ENCODE measurements at regions of chr1 and their contacts with region 1.

Region 1: DNA sequence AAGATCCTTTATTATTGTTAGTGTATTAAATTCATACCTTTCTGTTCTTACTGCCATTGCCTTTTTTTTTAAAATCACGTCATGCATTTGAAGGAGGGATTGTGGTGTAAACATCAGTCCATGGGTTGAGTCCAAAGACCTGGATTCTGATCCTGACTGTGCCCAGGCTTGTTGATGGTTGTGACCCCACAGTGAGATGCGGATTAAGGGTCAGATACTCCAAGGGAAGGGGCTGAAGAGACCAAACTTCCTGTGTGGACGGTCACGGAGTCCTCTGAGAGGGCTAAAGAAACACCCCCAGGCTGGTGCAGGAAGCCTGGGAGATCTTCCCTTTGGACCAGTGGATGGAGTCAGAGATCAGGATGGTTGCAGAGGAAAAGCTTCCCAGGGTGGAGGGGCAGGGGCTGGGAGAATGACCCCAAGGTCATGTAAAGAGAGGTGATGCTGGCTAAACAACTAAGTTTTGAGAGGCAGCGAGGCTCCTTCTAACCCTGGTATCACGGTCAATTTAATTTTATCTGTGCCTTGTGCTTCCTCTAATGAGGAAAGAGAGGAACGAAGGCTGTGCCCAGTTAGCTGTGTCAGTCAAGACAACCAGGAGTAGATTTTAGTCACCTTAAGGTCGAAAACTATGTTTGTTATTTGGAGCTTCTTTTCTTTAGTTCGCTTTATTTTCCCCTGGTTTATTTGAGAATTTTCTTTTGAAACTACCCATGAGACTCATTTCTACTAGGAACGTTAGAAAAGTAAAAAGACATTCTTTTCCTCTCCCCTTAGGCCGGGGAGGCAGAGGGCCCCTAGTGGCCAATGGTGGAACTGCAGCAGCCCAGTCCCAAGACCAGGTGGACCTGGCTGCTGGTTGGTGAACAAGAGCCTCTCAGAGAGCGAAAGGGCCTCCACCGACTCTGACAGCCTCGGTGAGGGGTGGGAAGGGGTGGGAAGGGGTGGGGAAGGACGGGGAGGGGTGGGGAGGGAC is 8.7 kb upstream of the GPR161 start:
- DNase-seq: peak; percentile 69 to 78 (median 72)
- H3K4me3 ChIP-seq: no peak overlapping the region
- H3K4me3 Mint-ChIP-seq: peak overlapping the region in 1 of 8 donors; percentile 30
- H3K27ac ChIP-seq: no peak overlapping the region
- H3K27ac Mint-ChIP-seq: no peak overlapping the region
- H3K4me1 ChIP-seq: no peaks in the 10 kb centered on the region
- H3K4me1 Mint-ChIP-seq: peaks cover 0 to 13% (median 4%) of the 10 kb centered on the region in 4 donors
- H3K27me3 ChIP-seq: no peaks in the 10 kb centered on the region
- H3K27me3 Mint-ChIP-seq: no peaks in the 10 kb centered on the region

Region 2: DNA sequence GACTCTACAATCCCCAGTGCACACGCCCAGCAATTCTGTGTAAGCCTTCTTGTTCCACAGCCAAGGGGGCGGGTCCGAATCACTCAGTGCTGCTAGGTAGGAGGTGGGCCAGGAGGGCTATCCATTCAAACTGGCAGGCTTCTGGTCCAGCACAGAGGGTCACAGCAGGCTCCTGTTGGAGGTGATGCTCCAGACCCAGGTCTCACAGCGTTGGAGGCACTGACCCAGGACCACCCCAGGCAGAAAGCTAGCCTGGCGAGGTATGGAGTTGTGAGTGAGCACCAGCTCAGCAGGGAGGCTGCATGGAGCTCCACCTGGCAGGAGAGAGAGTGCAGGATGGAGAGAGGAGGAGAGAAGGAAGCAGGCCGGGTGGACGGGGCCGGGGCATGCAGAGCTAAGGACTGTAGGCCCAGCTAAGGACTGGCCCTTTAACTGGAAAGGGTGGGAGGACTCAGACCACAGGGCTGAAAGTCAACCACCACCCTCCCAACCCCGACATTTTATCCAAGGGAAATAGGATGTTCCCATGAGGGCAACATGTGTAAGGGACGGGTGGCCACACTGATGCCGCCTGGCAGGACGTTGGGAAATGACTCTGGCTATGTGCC is 47.4 kb before region 1 on chr1:
- CTCF ChIA-PET with region 1: no interaction called
- POLR2A ChIA-PET with region 1: no interaction called
- intact Hi-C with region 1: no loop called
- DNase-seq: no peak
- H3K4me3 ChIP-seq: no peak overlapping the region
- H3K4me3 Mint-ChIP-seq: no peak overlapping the region
- H3K27ac ChIP-seq: no peak overlapping the region
- H3K27ac Mint-ChIP-seq: no peak overlapping the region
- H3K4me1 ChIP-seq: no peaks in the 10 kb centered on the region
- H3K4me1 Mint-ChIP-seq: peaks cover 0 to 5% (median 0%) of the 10 kb centered on the region in 4 donors
- H3K27me3 ChIP-seq: no peaks in the 10 kb centered on the region
- H3K27me3 Mint-ChIP-seq: peaks cover 2% of the 10 kb centered on the region in 2 donors

Region 3: GRCh38 chr1:168159251-168159650 is 13.8 kb after region 1 on chr1:
- CTCF ChIA-PET with region 1: interaction called, 10 read pairs
- POLR2A ChIA-PET with region 1: no interaction called
- intact Hi-C with region 1: no loop called
- DNase-seq: no peak
- H3K4me3 ChIP-seq: no peak overlapping the region
- H3K4me3 Mint-ChIP-seq: no peak overlapping the region
- H3K27ac ChIP-seq: no peak overlapping the region
- H3K27ac Mint-ChIP-seq: no peak overlapping the region
- H3K4me1 ChIP-seq: no peaks in the 10 kb centered on the region
- H3K4me1 Mint-ChIP-seq: no peaks in the 10 kb centered on the region
- H3K27me3 ChIP-seq: no peaks in the 10 kb centered on the region
- H3K27me3 Mint-ChIP-seq: peaks cover 23 to 30% of the 10 kb centered on the region in 2 donors